Testis (tissue), 5 donors: ENCODE measurements at regions of chr3 and their contacts with region 1.

Region 1: DNA sequence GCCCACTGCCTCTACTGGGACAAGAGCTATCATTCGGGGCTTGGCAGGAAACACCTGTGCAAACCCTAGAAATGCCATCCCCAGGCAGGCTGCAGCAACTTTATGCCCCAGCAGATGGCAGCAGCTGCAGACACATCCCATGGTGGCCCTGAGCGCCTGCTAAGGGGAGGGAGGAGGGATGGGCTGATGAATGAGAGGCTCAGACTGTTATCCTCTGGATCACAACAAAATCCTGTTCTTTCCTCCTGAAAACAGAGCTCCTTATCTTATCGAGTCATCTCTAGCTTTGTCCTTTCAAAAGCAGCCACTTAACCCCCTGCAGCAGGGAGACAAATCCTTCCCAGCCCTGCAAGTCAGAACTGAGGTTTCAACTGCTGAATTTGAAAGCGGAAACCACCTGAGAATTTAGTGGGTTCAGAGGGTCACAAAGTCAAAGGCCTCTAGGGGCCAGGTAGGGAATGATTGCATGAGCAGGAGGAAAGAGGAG is 90.6 kb upstream of the PROK2 start:
- DNase-seq: peak; percentile 84
- H3K4me3 ChIP-seq: no peak overlapping the region
- H3K27ac ChIP-seq: no peak overlapping the region
- H3K4me1 ChIP-seq: no peaks in the 10 kb centered on the region
- H3K27me3 ChIP-seq: no peaks in the 10 kb centered on the region
- CTCF ChIP-seq: peak; percentile 51 to 81 (median 59)
- POLR2A ChIP-seq: no peak

Region 2: GRCh38 chr3:72821161-72821781 is 945.8 kb after region 1 on chr3:
- intact Hi-C with region 1: loop called (anchors 5 kb)
- DNase-seq: no peak
- H3K4me3 ChIP-seq: no peak overlapping the region
- H3K27ac ChIP-seq: no peak overlapping the region
- H3K4me1 ChIP-seq: peaks cover 18% of the 10 kb centered on the region
- H3K27me3 ChIP-seq: no peaks in the 10 kb centered on the region
- CTCF ChIP-seq: no peak
- POLR2A ChIP-seq: no peak